Activated T-helper 1 cell treated with anti-CD3 and anti-CD28 coated beads, Interleukin-12 subunit alpha, Interleukin-12 subunit beta, Interleukin-2, Interleukin-4 antibody, amounts not matched to agents 30 ng/mL and 10 ng/mL and 1 ng/mL, durations not matched to agents 14 hours and 24 hours and 36 hours (primary cell): ENCODE measurements at regions of chr6 and their contacts with region 1.

Region 1: GRCh38 chr6:130020907-130021629 is 2.7 kb downstream of the L3MBTL3 start:
- DNase-seq: peak; percentile 71
- H3K4me3 Mint-ChIP-seq: peak overlapping the region; percentile 97
- H3K27ac Mint-ChIP-seq: peak overlapping the region; percentile 93
- H3K4me1 Mint-ChIP-seq: peaks cover 34% of the 10 kb centered on the region
- H3K27me3 Mint-ChIP-seq: peaks cover 22% of the 10 kb centered on the region

Region 2: DNA sequence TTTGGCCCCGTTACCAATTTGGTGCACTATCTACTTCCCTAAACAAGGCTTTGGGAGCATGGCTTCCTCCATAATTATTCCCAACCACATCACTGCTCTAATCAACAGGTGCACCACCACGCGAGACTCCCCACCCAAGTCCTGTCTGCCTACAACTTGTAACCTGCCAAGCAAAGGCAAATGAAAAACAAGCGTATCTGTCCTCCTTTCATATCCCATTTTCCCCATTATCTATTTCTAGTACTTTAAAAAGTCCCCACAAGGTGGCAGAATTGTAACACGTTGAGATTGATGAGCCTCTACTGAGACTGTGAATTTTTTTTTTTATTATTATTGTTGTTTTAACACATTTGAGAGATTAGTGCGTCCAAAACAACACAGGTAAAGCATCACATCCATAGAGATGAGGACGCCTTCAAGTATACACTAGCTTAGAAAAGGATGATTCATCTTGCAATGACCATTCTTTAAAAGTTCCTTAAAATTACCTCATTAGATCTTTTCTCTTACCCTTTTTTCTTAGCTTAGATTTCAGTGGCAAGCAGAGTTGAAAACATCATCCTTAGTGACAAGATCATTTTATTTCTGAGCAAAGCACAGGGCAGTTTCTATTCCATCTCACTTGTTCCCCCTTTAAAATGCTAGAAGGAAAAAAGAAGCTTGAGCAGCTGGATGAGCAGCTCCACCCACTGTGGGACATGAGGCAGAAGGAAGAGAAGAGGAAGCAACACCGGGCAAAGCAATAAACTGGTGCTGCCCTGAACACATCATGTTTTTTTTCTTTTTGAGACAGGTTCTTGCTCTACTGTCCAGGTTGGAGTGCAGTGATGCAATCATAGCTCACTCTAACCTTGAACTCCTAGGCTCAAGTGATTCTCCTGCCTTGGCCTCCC is 521.9 kb before region 1 on chr6:
- intact Hi-C with region 1: loop called (anchors 2 kb)
- DNase-seq: no peak
- H3K4me3 Mint-ChIP-seq: peak overlapping the region; percentile 43
- H3K27ac Mint-ChIP-seq: peak overlapping the region; percentile 42
- H3K4me1 Mint-ChIP-seq: peaks cover 79% of the 10 kb centered on the region
- H3K27me3 Mint-ChIP-seq: no peaks in the 10 kb centered on the region

Region 3: GRCh38 chr6:129646642-129647041 is 374.4 kb before region 1 on chr6:
- intact Hi-C with region 1: no loop called
- DNase-seq: no peak
- H3K4me3 Mint-ChIP-seq: no peak overlapping the region
- H3K27ac Mint-ChIP-seq: no peak overlapping the region
- H3K4me1 Mint-ChIP-seq: peaks cover 8% of the 10 kb centered on the region
- H3K27me3 Mint-ChIP-seq: peaks cover 6% of the 10 kb centered on the region

Region 4: GRCh38 chr6:129730477-129731165 is 290.4 kb before region 1 on chr6:
- intact Hi-C with region 1: loop called (anchors 1 kb)
- DNase-seq: no peak
- H3K4me3 Mint-ChIP-seq: no peak overlapping the region
- H3K27ac Mint-ChIP-seq: peak overlapping the region; percentile 29
- H3K4me1 Mint-ChIP-seq: peaks cover 15% of the 10 kb centered on the region
- H3K27me3 Mint-ChIP-seq: peaks cover 4% of the 10 kb centered on the region

Region 5: GRCh38 chr6:129893640-129894039 is 127.4 kb before region 1 on chr6:
- intact Hi-C with region 1: loop called (anchors 1 kb)
- DNase-seq: no peak
- H3K4me3 Mint-ChIP-seq: no peak overlapping the region
- H3K27ac Mint-ChIP-seq: no peak overlapping the region
- H3K4me1 Mint-ChIP-seq: peaks cover 6% of the 10 kb centered on the region
- H3K27me3 Mint-ChIP-seq: peaks cover 6% of the 10 kb centered on the region

Region 6: DNA sequence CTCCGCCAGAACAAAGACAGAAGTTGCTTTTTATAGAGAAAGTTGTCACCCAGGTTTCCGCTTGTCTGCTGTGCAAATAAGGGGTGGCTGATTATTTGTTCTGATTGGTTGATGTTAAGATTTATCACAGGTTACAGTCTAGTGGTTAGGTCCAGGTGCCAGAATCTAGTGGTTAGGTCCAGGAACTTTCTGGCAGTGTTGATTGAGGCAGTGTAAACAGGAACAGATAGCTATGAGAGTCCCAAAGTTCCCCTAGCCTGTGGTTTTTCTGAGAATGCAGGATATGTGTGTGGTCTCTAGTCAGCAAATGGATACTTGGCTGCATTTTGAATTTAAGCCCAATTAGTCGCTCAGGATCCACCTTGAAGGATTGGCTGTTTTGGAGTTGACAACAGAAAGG is 492.7 kb after region 1 on chr6:
- intact Hi-C with region 1: loop called (anchors 10 kb)
- DNase-seq: peak; percentile 82
- H3K4me3 Mint-ChIP-seq: peak overlapping the region; percentile 64
- H3K27ac Mint-ChIP-seq: peak overlapping the region; percentile 84
- H3K4me1 Mint-ChIP-seq: peaks cover 65% of the 10 kb centered on the region
- H3K27me3 Mint-ChIP-seq: no peaks in the 10 kb centered on the region